Right ventricle myocardium inferior (tissue), 1 donor: ENCODE measurements at regions of chr10 and their contacts with region 1.

Region 1: GRCh38 chr10:86971232-86971991 is 3.1 kb downstream of the ADIRF start:
- DNase-seq: no peak
- ATAC-seq: peak; percentile 84

Region 2: DNA sequence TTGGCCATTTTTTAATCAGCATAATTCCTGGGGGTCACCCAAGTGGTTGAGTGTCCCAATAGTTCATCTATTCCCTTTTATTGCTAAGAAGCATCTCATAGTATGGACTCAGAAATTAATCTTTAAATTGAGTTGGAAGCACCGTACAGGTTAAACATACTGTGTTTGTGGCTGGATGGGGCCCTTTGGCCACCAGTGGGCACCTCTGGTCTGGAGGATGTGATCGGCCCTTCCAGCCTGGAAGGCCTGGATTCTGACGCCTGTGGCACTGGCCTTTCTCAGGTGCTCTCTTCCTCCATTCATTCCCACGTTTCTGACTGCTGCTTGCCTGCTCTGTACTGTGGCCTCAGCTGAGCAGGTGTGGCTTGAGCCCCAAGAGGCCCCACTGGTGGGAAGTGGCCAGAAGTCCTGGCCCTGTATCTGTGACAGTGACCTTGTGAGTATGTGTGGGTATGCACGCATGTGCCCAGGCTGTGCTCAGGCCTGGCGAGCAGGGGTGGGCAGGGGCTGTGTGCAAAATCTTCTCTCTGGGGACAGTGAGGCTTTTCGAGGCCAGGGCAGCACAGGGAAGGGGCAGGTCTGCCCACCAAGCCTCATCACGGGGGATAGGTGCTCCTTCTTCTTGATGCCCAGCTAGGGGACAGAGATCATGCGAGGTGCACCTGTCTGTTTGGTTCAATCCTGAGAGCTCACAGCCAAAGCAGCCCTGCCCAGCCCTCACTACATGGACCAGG is 273.0 kb before region 1 on chr10:
- intact Hi-C with region 1: loop called (anchors 5 kb)
- DNase-seq: peak; percentile 20
- ATAC-seq: no peak

Region 3: GRCh38 chr10:86936661-86937501 is 34.5 kb before region 1 on chr10:
- intact Hi-C with region 1: loop called (anchors 5 kb)
- DNase-seq: peak; percentile 71
- ATAC-seq: no peak

Region 4: DNA sequence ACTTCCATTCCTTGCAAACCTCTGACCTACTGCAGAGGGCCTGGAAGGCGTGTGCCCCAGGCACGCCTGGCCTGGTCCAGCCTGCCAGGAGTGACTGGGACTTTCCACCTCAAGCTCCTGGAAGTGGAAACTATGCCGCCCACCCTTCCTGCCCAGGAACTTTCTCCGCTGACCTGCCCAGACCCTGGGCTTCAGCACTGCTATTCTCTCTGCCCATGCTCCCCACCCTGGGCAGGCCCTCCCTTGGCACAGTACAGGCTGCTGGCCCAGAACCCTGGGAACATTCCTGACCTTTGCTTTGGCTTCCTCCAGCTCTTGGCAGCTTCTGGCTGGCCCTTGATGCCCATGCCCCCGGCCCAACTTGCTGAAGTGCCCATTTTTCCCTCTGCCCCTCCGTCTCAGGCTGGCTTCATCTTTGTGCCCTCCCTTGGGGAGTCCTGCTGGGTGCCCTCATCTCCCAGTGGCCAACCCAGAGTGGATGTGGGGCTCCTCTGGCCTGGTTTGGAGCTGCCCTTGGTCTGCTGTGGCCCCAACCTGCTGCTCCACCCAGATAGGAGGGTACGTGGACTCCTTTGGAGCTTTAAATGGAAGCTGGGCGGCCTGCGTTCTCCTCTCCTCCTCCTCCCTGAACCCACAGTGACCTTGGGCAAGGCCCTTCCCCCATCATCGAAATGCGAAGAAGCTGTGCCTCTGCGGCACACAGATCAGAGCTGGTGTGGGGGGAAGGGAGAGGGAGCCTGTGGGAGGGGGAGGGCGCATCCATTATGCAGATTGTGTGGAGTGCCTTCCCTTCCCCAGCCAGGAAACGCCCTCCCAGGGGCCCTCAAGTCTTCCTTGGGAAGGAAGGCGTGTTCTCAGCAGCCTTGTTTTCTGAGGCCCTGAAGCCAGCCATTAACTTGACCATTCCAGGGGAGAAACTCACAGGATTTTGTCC is 17.4 kb before region 1 on chr10:
- intact Hi-C with region 1: loop called (anchors 2 kb)
- DNase-seq: peak; percentile 82
- ATAC-seq: peak; percentile 71

Region 5: GRCh38 chr10:87094373-87095235 is 123.2 kb after region 1 on chr10 and contains the starts of genes GLUD1 and SHLD2:
- intact Hi-C with region 1: loop called (anchors 2 kb)
- DNase-seq: peak; percentile 97
- ATAC-seq: peak; percentile 87
- total RNA-seq, gene GLUD1: 104 TPM
- total RNA-seq, gene SHLD2: 13.5 TPM